ENCODE measurements at regions of chr6 and their contacts with region 1.

Region 1: DNA sequence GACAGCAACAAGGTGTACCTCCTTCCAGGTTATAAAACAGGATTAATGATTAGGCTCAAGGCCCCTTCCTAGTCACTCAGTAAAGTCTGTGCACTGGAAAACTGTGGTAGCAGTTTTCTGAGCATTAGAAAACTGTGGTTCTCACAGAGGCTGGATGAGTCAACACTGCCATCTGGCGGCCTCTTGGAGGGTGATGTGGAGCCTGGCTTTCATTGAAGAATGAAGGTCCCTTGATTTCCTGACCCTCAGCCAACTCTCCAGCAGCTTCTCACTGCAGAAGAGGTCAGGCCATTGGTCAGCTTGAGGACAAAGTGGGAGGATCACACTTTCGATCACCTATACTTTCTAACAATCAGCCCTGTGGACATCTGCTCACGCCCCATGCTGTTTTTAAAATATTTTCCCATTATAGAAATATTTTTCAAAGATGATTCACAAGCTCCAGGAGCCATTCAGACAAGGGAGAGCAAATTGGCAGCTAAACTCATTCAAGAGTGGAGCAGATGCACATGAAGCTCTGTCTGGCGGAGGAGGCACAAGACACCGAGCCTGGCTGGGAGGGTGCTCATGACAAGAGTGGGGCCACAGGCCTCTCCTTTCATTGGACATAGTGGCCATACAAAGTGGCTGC is 23.2 kb downstream of the PSMB1 start:
- DNase-seq: peak; percentile 70
- H3K4me3 ChIP-seq: no peak overlapping the region; a peak in 1 of 4 replicates
- H3K27ac ChIP-seq: peak overlapping the region in 1 of 2 experiments; percentile 28; a peak in 2 of 4 replicates
- H3K4me1 ChIP-seq: peaks cover 0 to 2% of the 10 kb centered on the region in 2 experiments; a peak in 1 of 4 replicates
- H3K27me3 ChIP-seq: no peaks in the 10 kb centered on the region
- CTCF ChIP-seq: peak; percentile 95
- EP300 ChIP-seq: no peak
- RAD21 ChIP-seq: peak; percentile 98

Region 2: GRCh38 chr6:169800668-169801395 is 729.1 kb before region 1 on chr6:
- CTCF ChIA-PET with region 1: interaction called, 15 read pairs
- POLR2A ChIA-PET with region 1: no interaction called
- DNase-seq: no peak
- H3K4me3 ChIP-seq: no peak overlapping the region
- H3K27ac ChIP-seq: no peak overlapping the region
- H3K4me1 ChIP-seq: no peaks in the 10 kb centered on the region; a peak in 1 of 4 replicates
- H3K27me3 ChIP-seq: 0 out of 2 replicates have a peak, but pooled peaks cover 6% of the 10 kb centered on the region
- CTCF ChIP-seq: no peak
- EP300 ChIP-seq: no peak
- RAD21 ChIP-seq: no peak

Region 3: DNA sequence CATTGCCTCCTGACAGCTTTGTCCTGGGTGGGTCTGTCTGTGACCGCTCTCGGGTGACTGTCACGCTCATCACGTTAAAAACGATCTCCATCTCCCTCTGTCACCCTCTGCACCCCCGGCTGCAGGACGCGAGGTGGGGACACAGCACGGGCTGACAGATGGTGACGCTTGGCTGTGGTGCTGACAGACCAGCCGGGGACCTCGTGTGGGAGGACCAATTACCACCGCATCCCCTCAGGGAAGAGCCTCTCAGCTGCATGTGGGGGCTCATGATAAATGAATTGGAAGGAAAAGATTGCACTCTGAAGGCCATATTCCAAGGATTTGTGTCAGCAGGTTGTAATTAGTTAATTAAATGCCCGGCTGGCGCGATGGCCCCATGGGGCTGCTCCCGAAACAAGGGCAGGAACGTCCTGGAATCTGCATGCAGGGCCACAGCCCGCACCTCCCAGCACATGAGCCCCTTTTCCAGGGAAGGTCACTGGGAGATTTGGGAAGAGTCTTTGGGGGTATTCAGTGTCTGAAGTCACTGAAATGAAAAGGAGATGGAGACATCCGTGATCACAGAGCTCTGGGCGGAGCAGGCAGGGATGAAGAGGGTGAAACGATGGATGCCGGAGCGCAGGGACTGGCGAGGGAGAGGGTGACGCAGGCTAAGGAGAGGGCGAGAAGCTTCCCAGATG is 691.5 kb before region 1 on chr6:
- CTCF ChIA-PET with region 1: interaction called, 110 read pairs
- POLR2A ChIA-PET with region 1: no interaction called
- DNase-seq: peak; percentile 85
- H3K4me3 ChIP-seq: peak overlapping the region in 1 of 2 experiments; percentile 17; a peak in 1 of 4 replicates
- H3K27ac ChIP-seq: no peak overlapping the region
- H3K4me1 ChIP-seq: peaks cover 0 to 17% of the 10 kb centered on the region in 2 experiments; a peak in 2 of 4 replicates
- H3K27me3 ChIP-seq: no peaks in the 10 kb centered on the region; the same call in 1 of the 2 replicates
- CTCF ChIP-seq: no peak
- EP300 ChIP-seq: no peak
- RAD21 ChIP-seq: peak; percentile 60

Region 4: GRCh38 chr6:169959136-169960002 is 570.6 kb before region 1 on chr6:
- CTCF ChIA-PET with region 1: no interaction called
- POLR2A ChIA-PET with region 1: no interaction called
- DNase-seq: peak; percentile 32
- H3K4me3 ChIP-seq: no peak overlapping the region
- H3K27ac ChIP-seq: no peak overlapping the region
- H3K4me1 ChIP-seq: peaks cover 0 to 10% of the 10 kb centered on the region in 2 experiments; a peak in 1 of 4 replicates
- H3K27me3 ChIP-seq: no peaks in the 10 kb centered on the region
- CTCF ChIP-seq: no peak
- EP300 ChIP-seq: no peak
- RAD21 ChIP-seq: no peak

Region 5: GRCh38 chr6:170344631-170345575 is 185.1 kb before region 1 on chr6:
- CTCF ChIA-PET with region 1: no interaction called
- POLR2A ChIA-PET with region 1: no interaction called
- DNase-seq: no peak
- H3K4me3 ChIP-seq: no peak overlapping the region
- H3K27ac ChIP-seq: peak overlapping the region in 1 of 2 experiments; percentile 4; a peak in 1 of 4 replicates
- H3K4me1 ChIP-seq: no peaks in the 10 kb centered on the region; a peak in 2 of 4 replicates
- H3K27me3 ChIP-seq: no peaks in the 10 kb centered on the region
- CTCF ChIP-seq: no peak
- EP300 ChIP-seq: no peak
- RAD21 ChIP-seq: no peak

Region 6: GRCh38 chr6:170497845-170498301 is 32.1 kb before region 1 on chr6:
- CTCF ChIA-PET with region 1: no interaction called
- POLR2A ChIA-PET with region 1: no interaction called
- DNase-seq: no peak
- H3K4me3 ChIP-seq: no peak overlapping the region
- H3K27ac ChIP-seq: no peak overlapping the region
- H3K4me1 ChIP-seq: no peaks in the 10 kb centered on the region
- H3K27me3 ChIP-seq: peaks cover 11% of the 10 kb centered on the region; the same call in 1 of the 2 replicates
- CTCF ChIP-seq: no peak
- EP300 ChIP-seq: no peak
- RAD21 ChIP-seq: no peak

Region 7: DNA sequence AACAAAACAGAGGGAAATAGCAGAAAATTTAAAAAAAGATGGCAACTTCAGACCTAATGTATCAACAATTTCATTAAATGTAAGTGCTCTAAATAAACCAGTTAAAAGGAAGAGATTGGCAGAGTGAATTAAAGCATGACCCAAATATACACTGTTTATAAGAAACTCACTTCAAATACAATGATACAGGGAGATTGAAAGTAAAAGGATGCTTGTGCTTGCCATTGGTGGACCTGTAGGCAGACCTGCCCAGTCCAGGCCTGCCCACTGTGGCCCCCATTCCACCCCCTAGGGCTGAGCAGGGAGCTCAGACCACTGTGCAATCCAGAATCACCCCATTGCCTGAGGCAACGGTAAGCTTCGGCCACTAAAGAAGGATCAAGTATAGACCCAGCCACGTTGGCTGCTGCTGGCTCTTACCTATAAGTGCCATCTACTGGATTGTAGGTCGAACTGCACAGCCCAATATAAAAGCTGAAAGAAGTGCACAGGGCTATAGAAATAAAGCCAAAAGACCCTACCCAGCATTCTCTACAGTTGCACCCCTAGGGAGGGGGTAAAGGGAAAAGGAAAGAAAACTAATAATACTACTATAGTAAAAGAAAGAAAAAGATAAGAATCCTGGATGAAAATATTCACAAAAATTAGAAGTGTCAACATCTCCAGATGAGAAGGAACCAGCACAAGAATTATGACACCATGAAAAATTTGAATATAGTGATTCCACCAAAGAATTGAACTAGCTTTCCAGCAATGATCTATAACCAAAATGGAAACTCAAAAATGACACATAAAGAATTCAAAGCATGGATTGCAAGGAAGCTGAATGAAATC is 13.0 kb before region 1 on chr6:
- CTCF ChIA-PET with region 1: interaction called, 30 read pairs
- POLR2A ChIA-PET with region 1: no interaction called
- DNase-seq: peak; percentile 60
- H3K4me3 ChIP-seq: no peak overlapping the region; a peak in 1 of 4 replicates
- H3K27ac ChIP-seq: no peak overlapping the region
- H3K4me1 ChIP-seq: no peaks in the 10 kb centered on the region
- H3K27me3 ChIP-seq: no peaks in the 10 kb centered on the region
- CTCF ChIP-seq: peak; percentile 81
- EP300 ChIP-seq: no peak
- RAD21 ChIP-seq: peak; percentile 87

Region 8: DNA sequence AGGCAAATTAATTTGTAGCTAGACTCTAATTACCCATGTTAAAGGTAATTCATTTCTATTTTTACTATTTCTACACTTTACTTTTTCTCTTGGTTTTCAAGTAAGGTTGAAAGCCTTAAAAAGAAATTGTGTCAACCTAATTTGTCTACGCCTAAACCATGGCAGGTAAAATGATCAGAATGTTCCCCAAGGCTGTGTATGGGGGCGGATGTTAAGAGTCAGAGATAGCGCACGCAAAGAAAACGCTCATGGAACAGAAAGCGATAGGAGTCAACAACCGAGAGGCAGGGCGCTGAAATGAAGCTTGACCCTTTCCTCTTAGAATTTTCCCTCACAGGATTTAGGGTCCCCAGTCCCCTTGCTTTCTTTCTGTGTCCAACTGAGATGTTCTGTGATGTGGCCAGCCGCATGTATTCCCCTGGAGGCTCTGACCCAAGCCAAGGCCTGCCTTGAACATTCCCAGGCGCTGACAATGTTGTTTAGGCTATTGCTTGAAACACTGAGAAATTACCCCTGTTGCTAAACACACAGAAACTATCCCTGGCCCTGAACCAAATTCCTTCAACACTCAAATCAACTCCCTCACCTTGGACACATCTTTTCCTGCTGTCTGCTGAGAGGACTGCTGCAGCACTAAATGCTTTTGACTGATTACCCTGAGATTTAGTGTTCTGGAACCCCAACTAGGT is 12.2 kb after region 1 on chr6:
- CTCF ChIA-PET with region 1: interaction called, 29 read pairs
- POLR2A ChIA-PET with region 1: no interaction called
- DNase-seq: no peak
- H3K4me3 ChIP-seq: no peak overlapping the region
- H3K27ac ChIP-seq: no peak overlapping the region
- H3K4me1 ChIP-seq: no peaks in the 10 kb centered on the region
- H3K27me3 ChIP-seq: no peaks in the 10 kb centered on the region
- CTCF ChIP-seq: no peak
- EP300 ChIP-seq: no peak
- RAD21 ChIP-seq: no peak

Measured in SK-N-SH (cell line).